ENCODE measurements at regions of chr3 and their contacts with region 1.

Region 1: DNA sequence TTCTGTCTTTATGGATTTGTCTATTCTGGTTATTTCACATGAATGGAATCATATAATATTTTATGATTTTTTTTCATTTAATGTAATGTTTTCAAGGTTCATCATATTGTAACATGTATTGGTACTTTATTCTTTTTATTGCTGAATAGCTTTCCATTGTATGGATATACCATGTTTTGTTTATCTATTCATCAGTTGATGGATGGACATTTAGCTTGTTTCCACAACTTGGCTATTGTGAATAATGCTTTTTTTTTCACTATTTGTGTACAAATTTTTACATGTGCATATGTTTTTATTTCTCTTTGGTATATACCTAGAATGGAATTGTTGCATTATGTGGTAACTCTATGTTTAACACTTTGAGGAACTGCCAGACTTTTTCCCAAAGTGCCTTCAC is 64.7 kb downstream of the PFN2 start:
- DNase-seq: no peak
- H3K4me3 Mint-ChIP-seq: no peak overlapping the region
- H3K27ac Mint-ChIP-seq: no peak overlapping the region
- H3K4me1 Mint-ChIP-seq: no peaks in the 10 kb centered on the region
- H3K27me3 Mint-ChIP-seq: no peaks in the 10 kb centered on the region

Region 2: GRCh38 chr3:149936812-149937233 is 30.8 kb after region 1 on chr3:
- CTCF ChIA-PET with region 1: interaction called, 12 read pairs
- POLR2A ChIA-PET with region 1: no interaction called
- DNase-seq: peak; percentile 40
- H3K4me3 Mint-ChIP-seq: no peak overlapping the region
- H3K27ac Mint-ChIP-seq: no peak overlapping the region
- H3K4me1 Mint-ChIP-seq: peaks cover 11% of the 10 kb centered on the region
- H3K27me3 Mint-ChIP-seq: no peaks in the 10 kb centered on the region